Aorta (tissue), 5 donors: ENCODE measurements at regions of chr4 and their contacts with region 1.

Region 1: DNA sequence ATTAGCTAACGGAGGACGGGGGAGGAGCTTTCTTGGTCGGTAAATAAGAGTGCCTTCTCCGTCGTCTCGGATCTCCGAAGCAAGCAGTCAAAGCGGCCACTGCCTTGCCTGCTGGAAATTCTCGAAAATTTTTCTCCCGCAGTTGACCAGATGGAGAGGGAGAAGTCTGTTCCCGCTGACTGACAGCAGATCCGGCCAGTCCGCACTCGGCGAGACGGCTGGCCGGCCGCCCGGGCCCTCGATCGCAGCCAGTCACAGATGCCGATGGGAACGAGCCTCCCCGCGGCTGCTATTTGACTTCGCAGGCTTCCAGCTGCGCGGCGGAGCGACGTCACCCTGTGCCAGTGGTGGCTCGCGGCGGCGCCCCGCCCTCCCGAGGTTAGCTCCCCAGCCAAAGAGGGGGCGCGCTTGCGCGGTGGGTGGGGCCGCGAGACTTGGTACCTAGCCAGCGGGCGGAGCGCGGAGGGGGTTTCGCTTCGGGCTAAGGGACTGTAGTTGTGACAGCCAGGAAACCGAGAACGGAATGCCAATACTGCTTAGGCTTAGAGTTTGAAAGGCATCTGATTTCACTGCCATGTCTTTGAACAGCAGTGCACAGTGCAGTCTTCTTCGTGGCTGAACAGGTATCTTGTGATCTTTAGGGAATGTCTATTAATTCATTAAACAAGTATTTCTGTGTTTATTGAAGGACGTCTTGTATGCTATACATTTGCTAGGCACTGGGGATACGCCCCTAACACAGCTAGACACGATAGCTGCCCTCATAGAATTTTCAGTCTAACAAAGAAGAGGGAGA is at the start of gene PPM1K:
- DNase-seq: peak; percentile 100
- ATAC-seq: peak; percentile 98
- H3K4me3 ChIP-seq: peak within 1 kb of the TSS; percentile 83
- H3K27ac ChIP-seq: peak within 1 kb of the TSS; percentile 97
- H3K4me1 ChIP-seq: no peaks in the 10 kb centered on the region
- H3K27me3 ChIP-seq: no peaks in the 10 kb centered on the region
- total RNA-seq, gene PPM1K: 39.2 to 51.4 TPM

Region 2: GRCh38 chr4:88043001-88043400 is 241.6 kb before region 1 on chr4:
- intact Hi-C with region 1: no loop called
- DNase-seq: no peak
- ATAC-seq: no peak
- H3K4me3 ChIP-seq: no peak overlapping the region
- H3K27ac ChIP-seq: peak overlapping the region in 1 of 2 donors; percentile 77
- H3K4me1 ChIP-seq: peaks cover 4% of the 10 kb centered on the region in 2 donors
- H3K27me3 ChIP-seq: no peaks in the 10 kb centered on the region

Region 3: GRCh38 chr4:88341227-88342192 is 56.9 kb after region 1 on chr4:
- intact Hi-C with region 1: loop called in 1 of 2 experiments (anchors 5 kb)
- DNase-seq: no peak
- ATAC-seq: peak; percentile 83
- H3K4me3 ChIP-seq: no peak overlapping the region
- H3K27ac ChIP-seq: no peak overlapping the region
- H3K4me1 ChIP-seq: no peaks in the 10 kb centered on the region
- H3K27me3 ChIP-seq: no peaks in the 10 kb centered on the region